Mammary epithelial cell (primary cell): ENCODE measurements at regions of chr15 and their contacts with region 1.

Region 1: DNA sequence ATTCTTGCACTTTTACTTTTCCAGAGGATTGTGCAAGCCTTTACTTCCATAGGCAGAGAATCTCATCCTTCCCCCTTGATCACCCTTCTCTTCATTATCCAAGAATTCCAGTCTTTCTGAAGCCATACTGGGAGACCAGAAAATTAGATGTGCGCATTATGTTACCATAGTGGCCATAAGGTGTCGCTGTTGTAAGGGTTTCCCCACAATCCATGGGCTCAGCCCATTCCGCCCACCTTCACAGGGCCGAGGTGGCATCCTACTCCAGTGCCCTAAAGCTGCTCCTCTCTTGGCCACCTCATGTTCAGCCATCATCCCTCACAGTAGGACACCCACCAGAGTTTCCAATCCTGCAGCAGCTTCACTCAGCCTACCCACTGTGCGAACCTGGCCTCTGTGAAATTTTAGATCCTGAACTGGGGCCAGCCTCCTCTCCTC is 35.0 kb downstream of the CTSH start:
- DNase-seq: peak; percentile 33
- H3K4me3 ChIP-seq: no peak overlapping the region
- H3K27ac ChIP-seq: no peak overlapping the region
- H3K4me1 ChIP-seq: peaks cover 19% of the 10 kb centered on the region
- H3K27me3 ChIP-seq: no peaks in the 10 kb centered on the region
- CTCF ChIP-seq: peak; percentile 71 to 72

Region 2: DNA sequence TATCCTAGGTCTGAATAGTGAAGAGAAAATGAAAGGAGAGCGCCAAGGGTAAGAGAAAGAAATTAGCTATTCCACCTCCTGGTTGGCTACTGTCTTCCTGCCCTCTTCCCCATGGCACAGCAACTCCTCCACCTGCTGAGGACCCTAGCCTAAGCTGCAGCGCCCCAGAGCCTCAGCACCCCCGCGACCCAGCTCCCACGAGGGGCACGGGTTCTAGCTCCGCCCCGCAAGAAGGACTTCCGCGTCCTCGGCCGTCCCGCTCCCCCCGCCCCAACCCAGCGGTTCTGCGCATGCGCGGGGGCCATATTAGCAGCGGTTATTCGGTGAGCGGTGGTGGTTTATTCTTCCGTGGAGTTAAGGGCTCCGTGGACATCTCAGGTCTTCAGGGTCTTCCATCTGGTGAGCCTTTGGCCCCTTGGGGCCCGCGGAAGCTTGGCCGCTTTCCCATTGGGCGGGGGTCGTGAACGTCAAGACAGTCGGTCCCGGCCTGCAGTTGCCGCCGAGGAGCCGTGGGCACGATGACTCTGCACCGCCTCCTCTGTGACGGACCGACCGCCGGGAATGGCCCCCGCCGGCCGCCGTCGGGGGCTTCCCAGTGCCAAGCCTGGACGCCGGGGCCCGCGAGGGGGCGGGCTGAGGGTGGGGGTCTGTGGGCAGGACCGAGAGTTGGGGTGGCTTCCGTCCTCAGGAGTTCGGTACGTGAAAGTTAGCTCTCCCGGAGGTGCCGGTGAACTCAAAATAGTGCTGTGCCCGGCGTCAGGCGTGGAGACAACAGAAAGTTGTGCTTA is 369.5 kb before region 1 on chr15 and contains the start of gene PSMA4:
- CTCF ChIA-PET with region 1: interaction called, 16 read pairs
- dilution Hi-C with region 1: no loop called
- in situ Hi-C with region 1: no loop called
- intact Hi-C with region 1: no loop called
- DNase-seq: peak; percentile 78
- H3K4me3 ChIP-seq: peak within 1 kb of the TSS; percentile 88 to 95 (median 90)
- H3K27ac ChIP-seq: peak within 1 kb of the TSS; percentile 89
- H3K4me1 ChIP-seq: peaks cover 10% of the 10 kb centered on the region
- H3K27me3 ChIP-seq: no peaks in the 10 kb centered on the region
- CTCF ChIP-seq: no peak
- total RNA-seq, gene PSMA4: 144 to 173 TPM

Region 3: DNA sequence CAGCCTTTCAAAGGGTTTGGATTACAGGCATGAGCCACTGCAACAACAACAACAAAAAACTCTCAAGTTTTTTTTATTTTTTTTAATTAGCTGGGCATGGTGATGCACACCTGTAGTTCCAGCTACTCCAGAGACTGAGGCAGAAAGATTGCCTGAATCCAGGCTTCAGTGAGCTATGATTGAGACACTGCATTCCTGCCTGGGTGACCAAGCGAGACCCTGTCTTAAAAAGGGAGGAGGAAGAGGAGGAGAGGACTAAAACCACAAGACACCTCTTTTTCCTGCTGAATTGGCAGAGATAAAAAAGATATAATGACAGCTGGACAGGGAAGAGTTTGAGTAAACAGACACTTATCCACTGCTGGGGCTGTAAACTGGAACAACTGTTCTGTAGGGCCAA is 246.1 kb before region 1 on chr15:
- CTCF ChIA-PET with region 1: no interaction called
- dilution Hi-C with region 1: no loop called
- in situ Hi-C with region 1: no loop called
- intact Hi-C with region 1: no loop called
- DNase-seq: no peak
- H3K4me3 ChIP-seq: no peak overlapping the region
- H3K27ac ChIP-seq: no peak overlapping the region
- H3K4me1 ChIP-seq: no peaks in the 10 kb centered on the region
- H3K27me3 ChIP-seq: no peaks in the 10 kb centered on the region
- CTCF ChIP-seq: no peak

Region 4: DNA sequence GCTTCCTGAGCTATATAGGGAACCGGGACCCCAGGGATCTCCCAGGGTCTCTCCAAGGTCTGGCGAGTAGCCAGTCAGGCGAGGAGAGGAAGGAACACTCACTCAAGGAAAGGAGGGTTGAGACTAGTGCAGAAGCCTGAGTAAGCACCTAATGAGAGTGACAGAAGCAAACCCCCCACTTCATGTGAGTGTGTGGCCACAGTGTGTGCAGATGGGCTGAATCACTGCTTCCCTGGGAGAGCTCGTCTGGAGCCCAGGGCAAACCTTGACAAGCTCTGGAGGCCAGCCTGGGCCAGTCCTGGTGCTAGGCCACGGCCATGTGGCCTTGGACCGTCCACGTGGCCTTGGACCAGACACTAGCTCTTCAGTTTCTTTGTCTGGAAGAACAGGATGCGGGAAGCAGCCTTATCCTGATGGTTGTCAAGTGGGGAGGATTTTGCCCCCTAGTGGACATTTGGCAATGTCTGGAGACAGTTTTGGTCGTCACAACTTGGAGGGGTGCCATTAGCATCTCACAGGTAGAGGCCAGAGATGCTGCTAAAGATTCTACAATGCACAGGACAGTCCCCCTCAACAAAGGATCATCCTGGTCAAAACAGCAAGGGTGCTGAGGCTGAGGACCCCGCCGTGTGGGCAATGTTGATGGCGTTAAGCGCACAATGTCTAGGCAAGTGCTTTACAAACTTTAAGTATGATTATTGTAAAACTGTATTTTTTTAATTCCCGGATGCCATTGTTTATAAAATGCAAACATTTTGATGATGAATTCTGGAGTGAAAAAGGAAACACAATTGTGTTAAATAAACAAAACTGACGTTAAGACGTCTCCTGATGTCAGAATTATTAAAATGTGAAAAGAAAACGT is 69.9 kb after region 1 on chr15:
- CTCF ChIA-PET with region 1: no interaction called
- dilution Hi-C with region 1: no loop called
- in situ Hi-C with region 1: loop called in 1 of 2 experiments (anchors 5 kb)
- intact Hi-C with region 1: loop called (anchors 1 kb)
- DNase-seq: peak; percentile 80
- H3K4me3 ChIP-seq: no peak overlapping the region
- H3K27ac ChIP-seq: no peak overlapping the region
- H3K4me1 ChIP-seq: peaks cover 5% of the 10 kb centered on the region
- H3K27me3 ChIP-seq: no peaks in the 10 kb centered on the region
- CTCF ChIP-seq: peak; percentile 83 to 84

Region 5: GRCh38 chr15:78988361-78988911 is 78.6 kb after region 1 on chr15:
- CTCF ChIA-PET with region 1: interaction called, 3 read pairs
- dilution Hi-C with region 1: no loop called
- in situ Hi-C with region 1: loop called (anchors 5 kb)
- intact Hi-C with region 1: no loop called
- DNase-seq: peak; percentile 99
- H3K4me3 ChIP-seq: no peak overlapping the region
- H3K27ac ChIP-seq: peak overlapping the region; percentile 63
- H3K4me1 ChIP-seq: peaks cover 24% of the 10 kb centered on the region
- H3K27me3 ChIP-seq: no peaks in the 10 kb centered on the region
- CTCF ChIP-seq: no peak

Region 6: GRCh38 chr15:79028411-79028964 is 118.7 kb after region 1 on chr15:
- CTCF ChIA-PET with region 1: no interaction called
- dilution Hi-C with region 1: no loop called
- in situ Hi-C with region 1: no loop called
- intact Hi-C with region 1: loop called (anchors 2 kb)
- DNase-seq: peak; percentile 25
- H3K4me3 ChIP-seq: no peak overlapping the region
- H3K27ac ChIP-seq: no peak overlapping the region
- H3K4me1 ChIP-seq: no peaks in the 10 kb centered on the region
- H3K27me3 ChIP-seq: no peaks in the 10 kb centered on the region
- CTCF ChIP-seq: peak; percentile 91 to 92

Region 7: DNA sequence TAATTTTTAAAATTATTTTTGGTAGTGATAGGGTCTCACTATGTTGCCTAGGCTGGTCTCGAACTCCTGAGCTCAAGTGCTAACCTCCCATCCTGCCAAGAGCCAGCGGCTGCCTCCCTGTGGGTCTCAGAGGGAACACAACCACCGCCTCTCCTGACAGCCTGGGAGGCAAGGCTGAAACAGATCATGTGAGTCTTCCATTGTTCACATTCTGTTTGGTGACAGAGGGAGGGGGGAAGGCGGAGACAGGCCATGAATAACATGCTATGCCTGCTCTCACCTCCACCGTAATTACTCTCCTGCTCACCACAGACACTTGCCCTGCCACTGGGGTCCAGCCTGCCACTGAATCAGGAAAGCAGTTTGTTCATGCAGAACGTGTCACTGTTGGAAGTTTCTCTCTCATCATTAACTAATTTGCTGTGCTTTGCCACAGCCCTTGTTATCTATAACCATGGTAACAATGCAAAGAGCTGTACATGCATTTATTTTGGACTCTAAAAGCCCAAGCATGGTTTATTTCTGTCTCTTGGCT is 259.2 kb after region 1 on chr15:
- CTCF ChIA-PET with region 1: no interaction called
- dilution Hi-C with region 1: loop called (anchors 10 kb)
- in situ Hi-C with region 1: no loop called
- intact Hi-C with region 1: no loop called
- DNase-seq: peak; percentile 36
- H3K4me3 ChIP-seq: no peak overlapping the region
- H3K27ac ChIP-seq: no peak overlapping the region
- H3K4me1 ChIP-seq: peaks cover 14% of the 10 kb centered on the region
- H3K27me3 ChIP-seq: no peaks in the 10 kb centered on the region
- CTCF ChIP-seq: peak in 1 of 2 donors; percentile 36

Region 8: GRCh38 chr15:79184465-79184892 is 274.7 kb after region 1 on chr15:
- CTCF ChIA-PET with region 1: no interaction called
- dilution Hi-C with region 1: loop called (anchors 10 kb)
- in situ Hi-C with region 1: loop called (anchors 5 to 10 kb)
- intact Hi-C with region 1: loop called (anchors 1 kb)
- DNase-seq: peak; percentile 42
- H3K4me3 ChIP-seq: no peak overlapping the region
- H3K27ac ChIP-seq: no peak overlapping the region
- H3K4me1 ChIP-seq: peaks cover 2% of the 10 kb centered on the region
- H3K27me3 ChIP-seq: no peaks in the 10 kb centered on the region
- CTCF ChIP-seq: peak; percentile 97